Aorta (tissue), 5 donors: ENCODE measurements at regions of chr1 and their contacts with region 1.

Region 1: GRCh38 chr1:56831871-56832693 is 12.9 kb upstream of the FYB2 start:
- DNase-seq: peak; percentile 64 to 82
- ATAC-seq: peak; percentile 87
- H3K4me3 ChIP-seq: no peak overlapping the region
- H3K27ac ChIP-seq: no peak overlapping the region
- H3K4me1 ChIP-seq: peaks cover 0 to 3% of the 10 kb centered on the region in 2 donors
- H3K27me3 ChIP-seq: no peaks in the 10 kb centered on the region

Region 2: GRCh38 chr1:56547953-56548352 is 284.1 kb before region 1 on chr1:
- intact Hi-C with region 1: no loop called
- DNase-seq: no peak
- ATAC-seq: no peak
- H3K4me3 ChIP-seq: no peak overlapping the region
- H3K27ac ChIP-seq: no peak overlapping the region
- H3K4me1 ChIP-seq: peaks cover 4 to 11% of the 10 kb centered on the region in 2 donors
- H3K27me3 ChIP-seq: no peaks in the 10 kb centered on the region

Region 3: GRCh38 chr1:58047265-58047858 is 1215.3 kb after region 1 on chr1:
- intact Hi-C with region 1: loop called in 1 of 2 experiments (anchors 10 kb)
- DNase-seq: no peak
- ATAC-seq: no peak
- H3K4me3 ChIP-seq: no peak overlapping the region
- H3K27ac ChIP-seq: no peak overlapping the region
- H3K4me1 ChIP-seq: no peaks in the 10 kb centered on the region
- H3K27me3 ChIP-seq: no peaks in the 10 kb centered on the region

Region 4: GRCh38 chr1:58155418-58156123 is 1323.5 kb after region 1 on chr1:
- intact Hi-C with region 1: loop called in 1 of 2 experiments (anchors 10 kb)
- DNase-seq: no peak
- ATAC-seq: no peak
- H3K4me3 ChIP-seq: no peak overlapping the region
- H3K27ac ChIP-seq: no peak overlapping the region
- H3K4me1 ChIP-seq: no peaks in the 10 kb centered on the region
- H3K27me3 ChIP-seq: no peaks in the 10 kb centered on the region